Right ventricle myocardium superior (tissue), 1 donor: ENCODE measurements at regions of chr14 and their contacts with region 1.

Region 1: DNA sequence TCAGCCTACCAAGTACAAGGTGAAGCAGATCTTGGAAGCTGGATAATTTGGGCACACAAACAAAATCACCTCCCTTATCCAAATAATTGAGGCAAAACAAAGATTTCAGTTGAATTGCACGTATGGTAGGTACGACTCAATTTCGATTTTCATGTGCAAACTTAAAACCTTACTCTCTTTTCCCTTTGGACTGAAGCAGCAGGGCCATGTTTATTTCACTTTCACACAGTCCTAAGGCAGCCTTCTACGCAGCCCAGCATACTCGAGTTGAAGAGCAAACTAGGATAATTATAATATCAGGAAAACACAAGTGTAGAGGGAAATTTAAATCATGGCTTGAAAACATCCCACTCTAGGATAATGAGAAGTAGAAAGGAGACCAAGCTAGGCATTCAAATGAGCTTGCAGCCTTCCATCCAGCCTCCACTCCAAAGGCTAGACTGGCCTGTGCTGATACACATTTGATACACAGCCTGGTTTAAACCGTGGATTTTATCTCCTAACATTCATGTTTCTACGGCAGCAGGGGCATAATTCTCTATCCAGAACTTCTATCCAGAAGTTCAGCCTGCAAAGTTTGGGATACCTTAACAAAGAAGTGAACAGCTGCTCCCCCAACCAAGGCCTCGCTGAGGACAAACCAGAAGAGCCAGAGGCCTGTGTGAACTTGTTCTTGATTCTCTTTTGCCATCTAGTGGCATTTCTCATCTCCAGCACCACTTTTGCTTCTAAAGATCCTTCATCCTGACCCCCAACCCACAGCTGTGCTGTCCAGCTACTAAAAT is 2.4 kb upstream of the RNASE7 start:
- DNase-seq: peak; percentile 52
- ATAC-seq: peak; percentile 81

Region 2: GRCh38 chr14:21014761-21015190 is 25.0 kb before region 1 on chr14:
- intact Hi-C with region 1: loop called (anchors 2 kb)
- DNase-seq: peak; percentile 79
- ATAC-seq: peak; percentile 86